ENCODE measurements at regions of chr9 and their contacts with region 1.

Region 1: GRCh38 chr9:126398403-126399058 is 71.9 kb downstream of the MVB12B start:
- DNase-seq: peak; percentile 56 to 73 (median 57)
- H3K4me3 ChIP-seq: no peak overlapping the region
- H3K4me3 Mint-ChIP-seq: peak overlapping the region in 7 of 8 donors; percentile 24 to 73 (median 67)
- H3K27ac ChIP-seq: no peak overlapping the region
- H3K27ac Mint-ChIP-seq: peak overlapping the region in 6 of 7 donors; percentile 46 to 86 (median 64)
- H3K4me1 ChIP-seq: peaks cover 30% of the 10 kb centered on the region
- H3K4me1 Mint-ChIP-seq: peaks cover 23 to 44% (median 37%) of the 10 kb centered on the region in 4 donors
- H3K27me3 ChIP-seq: no peaks in the 10 kb centered on the region
- H3K27me3 Mint-ChIP-seq: no peaks in the 10 kb centered on the region

Region 2: GRCh38 chr9:126164796-126165525 is 233.6 kb before region 1 on chr9:
- CTCF ChIA-PET with region 1: no interaction called
- POLR2A ChIA-PET with region 1: no interaction called
- intact Hi-C with region 1: no loop called
- DNase-seq: no peak
- H3K4me3 ChIP-seq: no peak overlapping the region
- H3K4me3 Mint-ChIP-seq: no peak overlapping the region
- H3K27ac ChIP-seq: no peak overlapping the region
- H3K27ac Mint-ChIP-seq: no peak overlapping the region
- H3K4me1 ChIP-seq: no peaks in the 10 kb centered on the region
- H3K4me1 Mint-ChIP-seq: no peaks in the 10 kb centered on the region
- H3K27me3 ChIP-seq: no peaks in the 10 kb centered on the region
- H3K27me3 Mint-ChIP-seq: peaks cover 13 to 31% of the 10 kb centered on the region in 2 donors

Region 3: GRCh38 chr9:126228781-126229444 is 169.6 kb before region 1 on chr9:
- CTCF ChIA-PET with region 1: interaction called, 3 read pairs
- POLR2A ChIA-PET with region 1: no interaction called
- intact Hi-C with region 1: loop called (anchors 5 kb)
- DNase-seq: peak; percentile 47 to 58 (median 51)
- H3K4me3 ChIP-seq: no peak overlapping the region
- H3K4me3 Mint-ChIP-seq: peak overlapping the region in 1 of 8 donors; percentile 11
- H3K27ac ChIP-seq: no peak overlapping the region
- H3K27ac Mint-ChIP-seq: no peak overlapping the region
- H3K4me1 ChIP-seq: peaks cover 3% of the 10 kb centered on the region
- H3K4me1 Mint-ChIP-seq: peaks cover 0 to 8% (median 4%) of the 10 kb centered on the region in 4 donors
- H3K27me3 ChIP-seq: peaks cover 4% of the 10 kb centered on the region
- H3K27me3 Mint-ChIP-seq: peaks cover 28 to 46% of the 10 kb centered on the region in 2 donors

Region 4: GRCh38 chr9:126317513-126317912 is 81.0 kb before region 1 on chr9:
- CTCF ChIA-PET with region 1: interaction called, 21 read pairs
- POLR2A ChIA-PET with region 1: no interaction called
- intact Hi-C with region 1: loop called (anchors 1 kb)
- DNase-seq: peak; percentile 35 to 52 (median 40)
- H3K4me3 ChIP-seq: no peak overlapping the region
- H3K4me3 Mint-ChIP-seq: no peak overlapping the region
- H3K27ac ChIP-seq: no peak overlapping the region
- H3K27ac Mint-ChIP-seq: peak overlapping the region in 1 of 7 donors; percentile 59
- H3K4me1 ChIP-seq: peaks cover 4% of the 10 kb centered on the region
- H3K4me1 Mint-ChIP-seq: peaks cover 2 to 12% (median 9%) of the 10 kb centered on the region in 4 donors
- H3K27me3 ChIP-seq: no peaks in the 10 kb centered on the region
- H3K27me3 Mint-ChIP-seq: peaks cover 0 to 2% of the 10 kb centered on the region in 2 donors

Region 5: DNA sequence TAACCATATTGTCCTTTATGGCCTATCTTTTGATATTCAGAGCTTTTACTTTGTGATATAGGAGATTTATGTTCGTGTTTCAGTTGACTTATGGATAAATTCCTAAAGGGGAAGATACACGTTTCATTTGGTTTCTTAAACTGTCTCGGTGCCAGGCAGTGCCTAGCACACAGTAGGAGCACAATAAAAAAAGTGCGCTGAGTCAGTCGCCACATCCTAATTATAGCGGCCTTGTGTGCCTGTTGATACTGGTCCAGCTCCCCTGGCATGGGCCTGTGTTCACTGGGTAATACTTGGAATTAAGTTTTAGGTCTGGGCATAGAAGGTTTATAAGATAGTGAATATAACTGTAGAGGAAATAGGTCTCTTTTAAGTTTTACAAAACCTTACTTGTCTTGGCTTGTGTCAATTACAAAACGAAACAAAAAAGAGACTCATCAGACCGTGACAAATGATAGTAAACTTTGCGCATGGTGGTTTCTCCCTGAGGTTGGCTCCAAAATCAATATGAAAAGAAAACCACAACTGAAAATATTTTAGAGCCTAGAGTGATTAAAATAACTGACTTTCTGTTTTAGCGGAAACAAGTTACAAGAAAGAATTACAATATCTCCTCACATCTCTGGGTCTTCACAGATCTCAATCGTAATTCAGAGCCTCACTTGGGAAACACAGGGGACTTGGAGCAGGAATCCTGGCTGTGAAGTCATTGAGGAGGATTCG is 12.9 kb after region 1 on chr9:
- CTCF ChIA-PET with region 1: interaction called, 10 read pairs
- POLR2A ChIA-PET with region 1: no interaction called
- intact Hi-C with region 1: no loop called
- DNase-seq: peak; percentile 63 to 82 (median 70)
- H3K4me3 ChIP-seq: peak overlapping the region; percentile 14 to 60
- H3K4me3 Mint-ChIP-seq: peak overlapping the region; percentile 53 to 91 (median 82)
- H3K27ac ChIP-seq: peak overlapping the region; percentile 28
- H3K27ac Mint-ChIP-seq: peak overlapping the region; percentile 81 to 98 (median 91)
- H3K4me1 ChIP-seq: peaks cover 31% of the 10 kb centered on the region
- H3K4me1 Mint-ChIP-seq: peaks cover 24 to 39% (median 28%) of the 10 kb centered on the region in 4 donors
- H3K27me3 ChIP-seq: no peaks in the 10 kb centered on the region
- H3K27me3 Mint-ChIP-seq: no peaks in the 10 kb centered on the region